H1 (cell line): ENCODE measurements at regions of chr11 and their contacts with region 1.

Region 1: GRCh38 chr11:8006349-8006977 is 19.3 kb downstream of the EIF3F start:
- DNase-seq: peak in 1 of 2 experiments; percentile 77
- H3K4me3 ChIP-seq: no peak overlapping the region
- H3K27ac ChIP-seq: no peak overlapping the region
- H3K4me1 ChIP-seq: no peaks in the 10 kb centered on the region
- H3K27me3 ChIP-seq: peaks cover 0 to under 1% (median 0%) of the 10 kb centered on the region in 4 experiments; a peak in 1 of 7 replicates
- CTCF ChIP-seq: peak; percentile 54 to 97 (median 93)
- EP300 ChIP-seq: no peak
- POLR2A ChIP-seq: no peak
- RAD21 ChIP-seq: peak; percentile 99 to 100

Region 2: GRCh38 chr11:7994581-7995278 is 11.7 kb before region 1 on chr11:
- CTCF ChIA-PET with region 1: interaction called, 11 read pairs
- POLR2A ChIA-PET with region 1: interaction called, 14 read pairs
- DNase-seq: no peak
- H3K4me3 ChIP-seq: no peak overlapping the region
- H3K27ac ChIP-seq: no peak overlapping the region
- H3K4me1 ChIP-seq: no peaks in the 10 kb centered on the region
- H3K27me3 ChIP-seq: no peaks in the 10 kb centered on the region
- CTCF ChIP-seq: no peak
- EP300 ChIP-seq: no peak
- POLR2A ChIP-seq: peak in 1 of 2 experiments; percentile 15; a peak in 1 of 3 replicates
- RAD21 ChIP-seq: no peak

Region 3: DNA sequence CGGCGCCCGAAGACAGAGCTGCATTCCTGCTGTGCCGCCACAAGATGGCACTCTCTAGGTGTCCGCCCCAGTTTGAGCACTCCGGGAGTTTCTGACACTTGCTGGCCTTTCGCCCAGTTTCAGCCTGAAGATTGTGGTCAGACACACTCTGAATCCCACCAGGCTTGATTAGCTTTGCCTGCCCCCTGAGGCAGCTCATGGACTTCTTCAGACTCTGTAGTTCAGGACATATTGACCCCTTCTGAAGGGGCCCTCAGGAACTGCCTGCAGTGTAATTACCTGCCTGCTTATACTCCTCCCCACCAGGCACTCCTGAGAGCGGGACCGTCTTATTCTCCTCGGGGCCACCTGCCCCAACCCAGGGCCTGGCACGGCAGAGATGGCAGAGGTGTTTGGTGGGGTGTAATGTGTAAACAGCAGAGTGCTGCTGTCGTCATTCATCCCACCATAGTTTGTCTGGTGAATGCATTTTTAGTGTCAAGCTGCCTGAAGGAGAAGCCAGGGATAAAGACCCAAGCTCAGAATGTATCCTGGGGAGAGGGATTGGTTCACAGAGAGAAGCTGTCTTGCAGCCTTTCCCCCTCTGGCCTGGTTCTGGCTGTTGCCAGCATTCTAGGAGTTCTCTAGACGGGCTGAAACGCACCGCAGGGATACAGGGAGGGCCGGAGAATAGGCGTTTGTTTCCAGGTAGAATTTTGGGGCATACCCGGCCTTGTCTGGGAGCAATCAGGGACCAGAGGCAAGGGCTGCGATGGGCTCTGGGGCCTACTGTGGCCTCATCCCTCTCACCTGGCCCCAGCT is 27.0 kb after region 1 on chr11:
- CTCF ChIA-PET with region 1: interaction called, 161 read pairs
- POLR2A ChIA-PET with region 1: interaction called, 4 read pairs
- DNase-seq: peak in 1 of 2 experiments; percentile 88
- H3K4me3 ChIP-seq: 0 out of 8 replicates have a peak overlapping the region, but pooled peaks of 1 of the 4 experiments have one; percentile 29
- H3K27ac ChIP-seq: no peak overlapping the region
- H3K4me1 ChIP-seq: peaks cover 0 to 13% (median 4%) of the 10 kb centered on the region in 4 experiments; a peak in 5 of 7 replicates
- H3K27me3 ChIP-seq: peaks cover 0 to 14% (median 6%) of the 10 kb centered on the region in 4 experiments; a peak in 5 of 7 replicates
- CTCF ChIP-seq: peak; percentile 85 to 91 (median 88)
- EP300 ChIP-seq: no peak
- POLR2A ChIP-seq: no peak
- RAD21 ChIP-seq: peak; percentile 83

Region 4: DNA sequence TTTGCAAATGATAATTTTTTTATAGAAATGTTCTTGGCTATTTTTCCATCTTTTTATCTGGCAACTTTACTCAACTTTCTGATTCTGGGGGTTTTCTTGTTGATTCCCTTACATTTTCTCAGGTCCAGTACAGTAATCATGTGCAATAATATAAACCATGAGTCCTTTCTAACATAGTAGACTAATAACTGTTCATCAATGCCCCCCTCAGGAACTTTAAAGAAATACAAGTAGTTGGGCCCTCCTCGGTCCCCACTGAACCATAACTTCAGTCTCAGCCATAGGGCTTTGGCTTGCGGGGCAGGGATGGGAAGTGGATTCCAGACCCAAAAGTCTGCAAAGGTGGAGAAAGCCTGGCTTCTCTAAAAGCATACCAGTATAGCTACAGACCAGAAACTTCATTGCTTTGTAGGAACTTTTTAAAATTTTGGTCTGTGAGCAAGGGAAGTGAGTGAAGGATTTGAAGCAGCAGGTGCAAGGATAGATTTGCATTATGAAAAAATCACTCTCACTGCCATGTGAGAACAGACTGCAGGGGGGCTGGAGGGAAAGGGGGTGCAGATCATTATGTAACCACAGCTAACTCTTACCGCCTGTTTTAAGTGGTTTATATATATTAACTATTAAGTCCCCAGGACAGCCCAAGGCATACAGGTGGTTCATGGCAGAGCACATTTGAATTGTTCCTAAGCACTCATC is 64.1 kb after region 1 on chr11:
- CTCF ChIA-PET with region 1: interaction called, 34 read pairs
- POLR2A ChIA-PET with region 1: no interaction called
- DNase-seq: no peak
- H3K4me3 ChIP-seq: no peak overlapping the region
- H3K27ac ChIP-seq: no peak overlapping the region
- H3K4me1 ChIP-seq: peaks cover 2 to 18% (median 7%) of the 10 kb centered on the region in 4 experiments
- H3K27me3 ChIP-seq: no peaks in the 10 kb centered on the region; a peak in 2 of 7 replicates
- CTCF ChIP-seq: peak in 1 of 3 experiments; percentile 15; a peak in 1 of 4 replicates
- EP300 ChIP-seq: no peak
- POLR2A ChIP-seq: no peak
- RAD21 ChIP-seq: peak; percentile 19 to 38; a peak in 3 of 4 replicates

Region 5: GRCh38 chr11:8092587-8093424 is 86.3 kb after region 1 on chr11:
- CTCF ChIA-PET with region 1: interaction called, 769 read pairs
- POLR2A ChIA-PET with region 1: interaction called, 15 read pairs
- DNase-seq: peak in 1 of 2 experiments; percentile 71
- H3K4me3 ChIP-seq: no peak overlapping the region
- H3K27ac ChIP-seq: no peak overlapping the region
- H3K4me1 ChIP-seq: peaks cover 0 to 2% (median under 1%) of the 10 kb centered on the region in 4 experiments; a peak in 1 of 7 replicates
- H3K27me3 ChIP-seq: no peaks in the 10 kb centered on the region; a peak in 2 of 7 replicates
- CTCF ChIP-seq: peak; percentile 72 to 86 (median 79)
- EP300 ChIP-seq: no peak
- POLR2A ChIP-seq: no peak
- RAD21 ChIP-seq: peak; percentile 49 to 63